A673 (cell line): ENCODE measurements at regions of chr3 and their contacts with region 1.

Region 1: DNA sequence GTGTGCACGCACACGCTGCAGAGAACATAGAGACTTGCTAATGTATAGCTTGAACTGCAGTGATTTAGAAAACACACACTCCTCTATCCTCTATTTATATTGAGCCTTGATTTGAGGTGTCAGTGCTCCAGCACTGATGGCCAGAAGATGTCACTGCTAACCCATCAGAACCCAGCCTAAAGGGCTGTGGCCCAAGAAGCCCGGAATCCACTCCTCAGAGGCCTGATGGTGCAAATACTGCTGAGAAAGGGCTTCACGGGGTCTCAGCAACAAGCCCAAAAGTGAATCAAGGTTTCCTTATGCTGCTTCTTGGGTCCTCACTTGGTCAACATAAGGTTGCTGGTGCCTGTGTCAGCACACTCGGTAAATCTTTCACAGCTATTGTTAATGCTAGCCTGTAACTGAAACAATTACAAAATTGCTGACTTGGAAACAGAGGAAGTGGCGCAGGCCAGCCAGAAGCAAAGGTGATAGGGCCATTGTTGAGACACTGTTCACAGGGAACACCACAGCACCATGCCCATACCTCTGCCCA is 60.3 kb downstream of the HEG1 start:
- DNase-seq: peak; percentile 67
- H3K4me3 ChIP-seq: no peak overlapping the region
- H3K27ac ChIP-seq: no peak overlapping the region
- H3K4me1 ChIP-seq: peaks cover 12% of the 10 kb centered on the region
- H3K27me3 ChIP-seq: no peaks in the 10 kb centered on the region
- CTCF ChIP-seq: peak; percentile 77

Region 2: DNA sequence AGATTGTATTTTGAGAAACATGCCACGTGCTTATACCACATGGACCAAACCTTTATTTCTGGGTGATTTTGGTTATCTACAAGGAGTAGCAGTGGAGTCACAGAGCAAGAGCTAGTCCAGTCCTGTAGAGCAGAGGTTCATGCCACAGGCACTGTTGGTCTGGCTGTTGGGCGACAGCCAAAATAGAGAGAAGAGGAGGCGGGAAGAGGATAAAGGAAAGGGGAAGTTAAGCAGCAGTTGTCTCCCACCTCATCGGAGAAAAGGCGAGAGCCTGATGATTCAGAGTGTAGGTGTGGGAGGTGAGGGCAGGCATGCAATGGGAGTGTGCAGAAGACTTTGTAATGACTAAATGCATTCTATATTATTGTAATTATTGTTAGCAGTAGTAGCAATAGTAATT is 766.1 kb before region 1 on chr3:
- CTCF ChIA-PET with region 1: no interaction called
- POLR2A ChIA-PET with region 1: no interaction called
- intact Hi-C with region 1: no loop called
- DNase-seq: no peak
- H3K4me3 ChIP-seq: no peak overlapping the region
- H3K27ac ChIP-seq: no peak overlapping the region
- H3K4me1 ChIP-seq: no peaks in the 10 kb centered on the region
- H3K27me3 ChIP-seq: no peaks in the 10 kb centered on the region
- CTCF ChIP-seq: no peak

Region 3: GRCh38 chr3:125192190-125193035 is 196.9 kb after region 1 on chr3:
- CTCF ChIA-PET with region 1: no interaction called
- POLR2A ChIA-PET with region 1: no interaction called
- intact Hi-C with region 1: loop called (anchors 10 kb)
- DNase-seq: no peak
- H3K4me3 ChIP-seq: no peak overlapping the region
- H3K27ac ChIP-seq: no peak overlapping the region
- H3K4me1 ChIP-seq: no peaks in the 10 kb centered on the region
- H3K27me3 ChIP-seq: no peaks in the 10 kb centered on the region
- CTCF ChIP-seq: no peak

Region 4: GRCh38 chr3:125437631-125438435 is 442.3 kb after region 1 on chr3:
- CTCF ChIA-PET with region 1: interaction called, 3 read pairs
- POLR2A ChIA-PET with region 1: no interaction called
- intact Hi-C with region 1: loop called (anchors 2 kb)
- DNase-seq: peak; percentile 53
- H3K4me3 ChIP-seq: no peak overlapping the region
- H3K27ac ChIP-seq: no peak overlapping the region
- H3K4me1 ChIP-seq: no peaks in the 10 kb centered on the region
- H3K27me3 ChIP-seq: no peaks in the 10 kb centered on the region
- CTCF ChIP-seq: peak; percentile 97

Region 5: GRCh38 chr3:125519678-125520589 is 524.4 kb after region 1 on chr3 and contains the start of gene SNX4:
- CTCF ChIA-PET with region 1: interaction called, 12 read pairs
- POLR2A ChIA-PET with region 1: no interaction called
- intact Hi-C with region 1: no loop called
- DNase-seq: peak; percentile 93
- H3K4me3 ChIP-seq: peak within 1 kb of the TSS; percentile 99
- H3K27ac ChIP-seq: peak within 1 kb of the TSS; percentile 96
- H3K4me1 ChIP-seq: peaks cover 7% of the 10 kb centered on the region
- H3K27me3 ChIP-seq: no peaks in the 10 kb centered on the region
- CTCF ChIP-seq: no peak
- total RNA-seq, gene SNX4: 43.6 and 47.3 TPM in 2 replicates

Region 6: GRCh38 chr3:125585595-125586223 is 590.2 kb after region 1 on chr3:
- CTCF ChIA-PET with region 1: no interaction called
- POLR2A ChIA-PET with region 1: no interaction called
- intact Hi-C with region 1: loop called (anchors 5 kb)
- DNase-seq: peak; percentile 72
- H3K4me3 ChIP-seq: no peak overlapping the region
- H3K27ac ChIP-seq: no peak overlapping the region
- H3K4me1 ChIP-seq: peaks cover 23% of the 10 kb centered on the region
- H3K27me3 ChIP-seq: no peaks in the 10 kb centered on the region
- CTCF ChIP-seq: peak; percentile 94